Esophagus muscularis mucosa (tissue), 4 donors: ENCODE measurements at regions of chr19 and their contacts with region 1.

Region 1: GRCh38 chr19:10403137-10404021 is at the start of gene CDC37:
- DNase-seq: peak; percentile 99
- H3K4me3 ChIP-seq: peak within 1 kb of the TSS; percentile 81 to 99 (median 92)
- H3K27ac ChIP-seq: peak within 1 kb of the TSS; percentile 75 to 90 (median 86)
- H3K4me1 ChIP-seq: peaks cover 50 to 65% (median 58%) of the 10 kb centered on the region in 4 donors
- H3K27me3 ChIP-seq: peaks cover 0 to 41% (median 12%) of the 10 kb centered on the region in 4 donors
- CTCF ChIP-seq: peak in 1 of 3 experiments; percentile 26
- EP300 ChIP-seq: no peak
- POLR2A ChIP-seq: peak; percentile 66
- total RNA-seq, gene CDC37: 131 to 176 (median 160) TPM

Region 2: GRCh38 chr19:10271543-10272086 is 131.8 kb before region 1 on chr19:
- intact Hi-C with region 1: no loop called
- DNase-seq: no peak
- H3K4me3 ChIP-seq: peak overlapping the region; percentile 46 to 59 (median 50)
- H3K27ac ChIP-seq: peak overlapping the region; percentile 68 to 88 (median 79)
- H3K4me1 ChIP-seq: peaks cover 32 to 56% (median 37%) of the 10 kb centered on the region in 4 donors
- H3K27me3 ChIP-seq: peaks cover 0 to 39% (median 15%) of the 10 kb centered on the region in 4 donors
- CTCF ChIP-seq: no peak
- EP300 ChIP-seq: no peak
- POLR2A ChIP-seq: no peak

Region 3: DNA sequence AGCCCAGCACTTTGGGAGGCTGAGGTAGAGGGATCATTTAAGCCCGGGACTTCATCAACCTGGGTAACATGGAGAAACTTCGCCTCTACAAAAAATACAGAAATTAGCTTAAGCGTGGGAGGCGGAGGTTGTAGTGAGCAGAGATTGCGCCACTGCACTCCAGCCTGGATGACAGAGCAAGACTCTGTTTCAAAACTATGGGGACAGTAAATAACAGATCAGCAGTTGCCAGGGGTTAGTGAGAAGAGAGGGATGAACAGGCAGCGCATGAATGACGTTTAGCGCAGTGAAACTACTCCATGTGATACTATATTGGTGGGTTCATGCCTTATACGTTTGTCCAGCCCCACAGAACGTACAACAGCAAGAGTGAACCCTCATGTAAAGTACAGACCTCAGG is 56.9 kb before region 1 on chr19:
- intact Hi-C with region 1: no loop called
- DNase-seq: no peak
- H3K4me3 ChIP-seq: no peak overlapping the region
- H3K27ac ChIP-seq: no peak overlapping the region
- H3K4me1 ChIP-seq: no peaks in the 10 kb centered on the region
- H3K27me3 ChIP-seq: no peaks in the 10 kb centered on the region
- CTCF ChIP-seq: no peak
- EP300 ChIP-seq: no peak
- POLR2A ChIP-seq: no peak

Region 4: DNA sequence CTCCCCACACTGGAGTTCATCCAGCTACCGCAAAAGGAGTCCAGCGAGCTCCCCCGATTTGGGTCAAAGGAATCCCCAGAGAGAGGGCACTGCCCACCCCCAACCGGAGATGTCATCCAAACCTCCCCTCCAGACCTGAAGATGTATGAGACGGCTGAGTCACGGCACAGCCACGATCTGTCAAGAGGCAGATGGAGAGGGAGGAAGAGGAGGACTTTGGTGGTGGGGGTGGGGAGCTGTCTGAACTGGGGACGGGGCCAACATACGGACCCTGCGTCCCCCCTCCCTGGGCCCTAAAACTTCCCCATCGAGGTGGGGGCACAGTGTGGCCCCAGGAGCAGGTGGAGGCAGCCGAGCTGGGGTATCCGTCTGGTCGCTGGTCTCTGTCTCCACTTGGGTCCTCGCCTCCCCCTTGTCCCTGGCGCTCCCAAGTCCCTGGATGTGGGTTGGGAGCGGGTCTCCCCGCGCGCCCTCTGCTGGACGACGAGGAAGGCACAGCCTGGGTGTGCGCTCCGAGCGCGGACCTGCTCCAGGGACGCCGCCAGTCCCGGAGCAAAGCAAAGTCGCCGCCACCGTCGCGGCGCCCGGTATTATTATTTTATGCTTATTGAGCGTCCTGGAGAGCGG is 20.7 kb after region 1 on chr19:
- intact Hi-C with region 1: loop called (anchors 1 kb)
- DNase-seq: no peak
- H3K4me3 ChIP-seq: peak overlapping the region; percentile 34 to 52 (median 38)
- H3K27ac ChIP-seq: no peak overlapping the region
- H3K4me1 ChIP-seq: peaks cover 31 to 42% (median 35%) of the 10 kb centered on the region in 4 donors
- H3K27me3 ChIP-seq: peaks cover 9 to 78% (median 55%) of the 10 kb centered on the region in 4 donors
- CTCF ChIP-seq: peak in 2 of 3 experiments; percentile 80 to 89
- EP300 ChIP-seq: no peak
- POLR2A ChIP-seq: no peak

Region 5: GRCh38 chr19:10565567-10566407 is 162.4 kb after region 1 on chr19 and contains the start of gene KRI1:
- intact Hi-C with region 1: loop called (anchors 10 kb)
- DNase-seq: peak; percentile 100
- H3K4me3 ChIP-seq: peak within 1 kb of the TSS; percentile 81 to 95 (median 90)
- H3K27ac ChIP-seq: peak within 1 kb of the TSS; percentile 87 to 94 (median 90)
- H3K4me1 ChIP-seq: peaks cover 36 to 49% (median 45%) of the 10 kb centered on the region in 4 donors
- H3K27me3 ChIP-seq: no peaks in the 10 kb centered on the region
- CTCF ChIP-seq: peak in 1 of 3 experiments; percentile 40
- EP300 ChIP-seq: peak; percentile 68
- POLR2A ChIP-seq: peak; percentile 70
- total RNA-seq, gene KRI1: 13.7 to 23.9 (median 16.0) TPM